MCF 10A (cell line): ENCODE measurements at regions of chr4 and their contacts with region 1.

Region 1: DNA sequence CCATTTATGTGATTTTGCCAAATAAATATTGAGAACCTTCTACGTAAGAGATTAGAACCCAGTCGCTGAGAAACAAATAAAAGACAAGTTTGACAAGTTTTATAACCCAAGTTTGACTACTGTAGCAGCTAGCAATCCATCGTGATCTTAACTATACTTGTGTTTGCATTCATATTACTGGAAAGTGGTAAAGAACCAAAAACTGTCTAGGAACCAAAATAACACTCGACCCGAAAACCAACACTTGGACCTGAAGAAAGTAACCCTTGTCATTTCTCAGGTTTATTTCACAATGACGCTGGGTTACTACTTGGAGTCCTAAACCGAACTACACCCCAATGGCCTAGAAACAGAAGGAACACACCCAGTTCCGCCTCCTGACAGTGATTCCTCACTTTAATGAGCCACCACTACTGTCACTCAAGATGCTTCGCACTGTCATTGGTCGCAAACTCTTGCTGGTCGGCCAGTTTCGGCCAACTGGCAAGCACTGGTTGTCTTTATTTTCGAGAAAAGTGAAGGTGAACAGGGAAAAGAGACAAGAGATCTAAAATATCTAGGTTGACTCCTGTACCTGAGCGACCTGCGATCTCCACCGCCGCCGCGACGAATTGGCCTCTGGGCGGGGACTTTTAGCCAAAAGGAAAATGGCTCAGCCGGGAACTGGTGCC is 496 bp downstream of the FBXO8 start:
- DNase-seq: peak; percentile 97
- H3K4me3 Mint-ChIP-seq: peak overlapping the region; percentile 99
- H3K27ac Mint-ChIP-seq: peak overlapping the region; percentile 98
- H3K4me1 Mint-ChIP-seq: peaks cover 38% of the 10 kb centered on the region
- H3K27me3 Mint-ChIP-seq: no peaks in the 10 kb centered on the region
- CTCF ChIP-seq: no peak

Region 2: GRCh38 chr4:173334085-173334772 is 948.7 kb before region 1 on chr4 and contains the start of gene HMGB2:
- CTCF ChIA-PET with region 1: no interaction called
- POLR2A ChIA-PET with region 1: interaction called, 35 read pairs
- intact Hi-C with region 1: no loop called
- DNase-seq: peak; percentile 100
- H3K4me3 Mint-ChIP-seq: peak within 1 kb of the TSS; percentile 99
- H3K27ac Mint-ChIP-seq: peak within 1 kb of the TSS; percentile 100
- H3K4me1 Mint-ChIP-seq: peaks cover 14% of the 10 kb centered on the region
- H3K27me3 Mint-ChIP-seq: no peaks in the 10 kb centered on the region
- CTCF ChIP-seq: no peak
- total RNA-seq, gene HMGB2: 124 and 176 TPM in 2 replicates

Region 3: GRCh38 chr4:174080361-174080760 is 202.6 kb before region 1 on chr4:
- CTCF ChIA-PET with region 1: no interaction called
- POLR2A ChIA-PET with region 1: no interaction called
- intact Hi-C with region 1: no loop called
- DNase-seq: peak; percentile 7
- H3K4me3 Mint-ChIP-seq: no peak overlapping the region
- H3K27ac Mint-ChIP-seq: no peak overlapping the region
- H3K4me1 Mint-ChIP-seq: peaks cover 7% of the 10 kb centered on the region
- H3K27me3 Mint-ChIP-seq: peaks cover 45% of the 10 kb centered on the region
- CTCF ChIP-seq: no peak

Region 4: GRCh38 chr4:174252412-174252811 is 30.6 kb before region 1 on chr4:
- CTCF ChIA-PET with region 1: no interaction called
- POLR2A ChIA-PET with region 1: interaction called, 18 read pairs
- intact Hi-C with region 1: no loop called
- DNase-seq: no peak
- H3K4me3 Mint-ChIP-seq: no peak overlapping the region
- H3K27ac Mint-ChIP-seq: no peak overlapping the region
- H3K4me1 Mint-ChIP-seq: no peaks in the 10 kb centered on the region
- H3K27me3 Mint-ChIP-seq: no peaks in the 10 kb centered on the region
- CTCF ChIP-seq: no peak

Region 5: GRCh38 chr4:174265916-174266315 is 17.1 kb before region 1 on chr4:
- CTCF ChIA-PET with region 1: no interaction called
- POLR2A ChIA-PET with region 1: interaction called, 66 read pairs
- intact Hi-C with region 1: no loop called
- DNase-seq: no peak
- H3K4me3 Mint-ChIP-seq: no peak overlapping the region
- H3K27ac Mint-ChIP-seq: no peak overlapping the region
- H3K4me1 Mint-ChIP-seq: no peaks in the 10 kb centered on the region
- H3K27me3 Mint-ChIP-seq: no peaks in the 10 kb centered on the region
- CTCF ChIP-seq: no peak

Region 6: GRCh38 chr4:174318829-174319764 is 36.1 kb after region 1 on chr4:
- CTCF ChIA-PET with region 1: interaction called, 3 read pairs
- POLR2A ChIA-PET with region 1: interaction called, 18 read pairs
- intact Hi-C with region 1: no loop called
- DNase-seq: peak; percentile 48
- H3K4me3 Mint-ChIP-seq: no peak overlapping the region
- H3K27ac Mint-ChIP-seq: no peak overlapping the region
- H3K4me1 Mint-ChIP-seq: peaks cover 8% of the 10 kb centered on the region
- H3K27me3 Mint-ChIP-seq: no peaks in the 10 kb centered on the region
- CTCF ChIP-seq: peak; percentile 52

Region 7: GRCh38 chr4:174764105-174764729 is 481.2 kb after region 1 on chr4:
- CTCF ChIA-PET with region 1: no interaction called
- POLR2A ChIA-PET with region 1: no interaction called
- intact Hi-C with region 1: no loop called
- DNase-seq: peak; percentile 59
- H3K4me3 Mint-ChIP-seq: no peak overlapping the region
- H3K27ac Mint-ChIP-seq: no peak overlapping the region
- H3K4me1 Mint-ChIP-seq: no peaks in the 10 kb centered on the region
- H3K27me3 Mint-ChIP-seq: no peaks in the 10 kb centered on the region
- CTCF ChIP-seq: peak; percentile 56